ENCODE measurements at regions of chr9 and their contacts with region 1.

Region 1: GRCh38 chr9:137223078-137223970 is 1.3 kb upstream of the RNF208 start:
- DNase-seq: peak; percentile 96 to 98
- ATAC-seq: peak; percentile 78

Region 2: GRCh38 chr9:137123468-137123837 is 99.9 kb before region 1 on chr9:
- intact Hi-C with region 1: loop called in 1 of 2 experiments (anchors 5 kb)
- DNase-seq: no peak
- ATAC-seq: no peak

Region 3: DNA sequence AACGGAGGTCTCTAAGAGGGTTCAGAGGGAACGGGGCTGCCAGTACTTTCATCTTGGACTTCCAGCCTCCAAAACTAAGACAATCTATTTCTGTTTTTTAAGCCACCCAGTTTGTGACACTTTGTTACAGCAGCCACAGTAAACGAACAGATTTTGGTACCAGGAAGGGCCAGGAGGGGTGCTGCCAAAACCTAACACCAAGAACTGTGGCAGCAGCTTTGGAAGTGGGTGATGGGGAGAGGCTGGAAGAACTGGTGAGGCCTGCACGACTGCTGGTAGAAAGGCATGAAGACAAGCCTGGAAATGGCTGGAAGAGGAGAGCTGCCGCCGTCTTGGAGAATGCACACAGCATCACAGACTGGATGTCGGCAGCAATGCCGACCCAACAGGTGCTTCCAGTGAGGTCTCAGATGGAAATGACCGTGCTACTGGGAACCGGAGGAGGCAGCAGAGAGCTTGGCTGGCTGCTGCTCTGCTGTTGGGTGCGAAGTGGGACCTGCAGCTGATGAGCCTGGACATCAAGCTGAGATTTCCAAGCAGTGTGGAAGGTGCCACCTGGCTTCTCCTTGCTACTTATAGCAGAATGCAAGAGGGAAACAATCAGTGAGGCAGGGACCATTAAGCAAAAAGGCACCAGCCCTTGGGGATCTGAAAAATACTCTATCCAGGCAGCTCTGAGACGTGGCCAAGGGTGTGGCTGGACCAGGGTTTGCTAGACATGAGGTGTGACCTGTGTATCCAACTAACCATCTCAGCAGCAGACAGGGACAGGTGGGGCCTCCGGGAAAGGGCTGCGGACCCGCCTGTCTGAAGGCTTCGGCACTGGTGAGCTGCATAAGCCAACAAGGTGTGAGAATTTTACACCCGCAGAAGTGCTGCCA is 46.8 kb before region 1 on chr9:
- intact Hi-C with region 1: loop called in 1 of 2 experiments (anchors 10 kb)
- DNase-seq: peak in 1 of 2 donors; percentile 55
- ATAC-seq: peak; percentile 71

Region 4: GRCh38 chr9:137723783-137724445 is 500.6 kb after region 1 on chr9:
- intact Hi-C with region 1: no loop called
- DNase-seq: no peak
- ATAC-seq: no peak